HEK293T (cell line): ENCODE measurements at regions of chr9 and their contacts with region 1.

Region 1: DNA sequence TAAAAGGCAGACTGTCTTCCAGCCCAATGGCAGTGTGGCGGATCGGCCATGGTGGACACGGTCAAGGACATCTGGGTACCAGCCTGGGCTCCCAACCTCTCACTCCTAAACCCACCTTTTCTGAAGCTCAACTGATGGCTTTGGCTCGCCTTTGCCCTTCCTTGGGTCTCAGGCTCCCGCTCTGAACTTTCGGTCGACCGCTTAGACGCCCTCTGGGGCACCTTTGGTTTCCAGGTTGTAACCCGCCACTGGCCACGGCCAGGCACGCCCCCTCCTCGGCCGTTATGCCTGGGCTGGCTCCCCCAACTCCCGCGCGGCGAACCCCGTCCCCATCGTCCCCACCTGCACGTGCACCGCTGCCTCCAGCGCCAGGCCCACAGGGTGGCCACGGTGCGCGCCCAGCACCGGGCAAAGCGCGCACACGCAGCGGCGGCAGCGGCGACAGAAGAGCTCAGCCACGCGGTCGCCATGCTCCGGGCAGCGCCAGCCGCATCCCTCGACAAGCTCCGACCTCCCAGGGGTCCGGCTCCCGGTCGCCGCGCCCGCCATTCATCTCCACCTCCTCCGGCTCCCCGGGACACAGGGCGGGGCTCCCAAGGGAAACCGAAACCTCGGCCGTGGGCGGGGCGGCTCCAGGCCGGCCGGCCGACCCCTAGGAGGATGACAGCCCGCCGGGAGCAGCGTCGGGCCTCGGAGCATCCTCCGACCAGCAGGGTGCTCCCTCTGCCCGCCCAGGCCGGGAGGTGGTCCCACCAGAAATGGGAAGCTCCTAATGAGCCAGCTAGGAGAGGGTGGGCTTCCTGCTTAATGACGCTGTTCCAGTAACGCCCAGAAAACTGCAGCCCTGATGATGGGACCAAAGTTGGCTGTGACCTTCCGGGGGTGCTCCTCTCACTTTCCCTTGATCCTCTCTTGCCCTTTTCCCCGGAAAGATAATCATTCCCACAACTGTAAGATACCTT is at the start of gene TRIM14:
- DNase-seq: peak; percentile 63

Region 2: GRCh38 chr9:98108531-98109031 is 10.3 kb before region 1 on chr9:
- CTCF ChIA-PET with region 1: interaction called, 4 read pairs
- POLR2A ChIA-PET with region 1: interaction called, 11 read pairs
- DNase-seq: no peak

Region 3: DNA sequence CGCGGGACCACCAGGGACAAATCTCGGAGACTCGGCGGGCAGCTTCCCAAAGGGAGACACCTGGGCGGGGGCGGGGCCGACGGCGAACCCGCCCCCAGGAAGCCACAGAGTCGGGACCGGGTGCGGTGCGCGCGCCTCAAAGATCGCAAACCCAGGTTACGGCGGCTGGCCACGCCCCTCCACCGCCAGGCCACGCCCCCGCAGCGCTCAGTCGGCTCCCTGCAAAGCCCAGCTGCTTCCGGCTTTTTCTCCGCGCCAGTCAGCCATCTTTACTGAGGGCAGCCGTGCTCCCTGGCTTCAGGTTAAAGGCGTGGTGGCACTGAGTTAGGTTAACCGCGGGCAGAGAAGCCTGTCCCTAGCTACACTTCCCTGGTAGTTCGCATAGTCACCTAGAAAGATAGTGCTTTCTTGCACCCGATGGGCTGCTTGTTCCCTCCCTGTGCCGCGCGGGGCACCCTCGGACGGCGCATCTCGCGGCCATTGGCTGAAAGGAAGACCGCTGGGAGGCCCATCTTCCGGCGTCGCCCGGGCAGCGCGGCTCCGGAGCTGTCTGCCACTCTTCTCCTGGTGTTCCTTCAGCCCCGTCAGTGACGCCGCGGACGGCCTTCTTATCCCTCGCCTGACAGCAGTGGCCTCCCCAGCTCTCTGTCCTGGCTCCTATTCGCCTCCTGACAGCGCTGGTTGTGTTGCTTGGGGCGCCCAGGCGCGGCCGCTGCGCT is 136.8 kb after region 1 on chr9 and contains the start of gene TBC1D2:
- CTCF ChIA-PET with region 1: interaction called, 4 read pairs
- POLR2A ChIA-PET with region 1: interaction called, 12 read pairs
- DNase-seq: peak; percentile 97